Activated CD4-positive, alpha-beta memory T cell treated with anti-CD3 and anti-CD28 coated beads for 36 hours (primary cell): ENCODE measurements at regions of chr6 and their contacts with region 1.

Region 1: DNA sequence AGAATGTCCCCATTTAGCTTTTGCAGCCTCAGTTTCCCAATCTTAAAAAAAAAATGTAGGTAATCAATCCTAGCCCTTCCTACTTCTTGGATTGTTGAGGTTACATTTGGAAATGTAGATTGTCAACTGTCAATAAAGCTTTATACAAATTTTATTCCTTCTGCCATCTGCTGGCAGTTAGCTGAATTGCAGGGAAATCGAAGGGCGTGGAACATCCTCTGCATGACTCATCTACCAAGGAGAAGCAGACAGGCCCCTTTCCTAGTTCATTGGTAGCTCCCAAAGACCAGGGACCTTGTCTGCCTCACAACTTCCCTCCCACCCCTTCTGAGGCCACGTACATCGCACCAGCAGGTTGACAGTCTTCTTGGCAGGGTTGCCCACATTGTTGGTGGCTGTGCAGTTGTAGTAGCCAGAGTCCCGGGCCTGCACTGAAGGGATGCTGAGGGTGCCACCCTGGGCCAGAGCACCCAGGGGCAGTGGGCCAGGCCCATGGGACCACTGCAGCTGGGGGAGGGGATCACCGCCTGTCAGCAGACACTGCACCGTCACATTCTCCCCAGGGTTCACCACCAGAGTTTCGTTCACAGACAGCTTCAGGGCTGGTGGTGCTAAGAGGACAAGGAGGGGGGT is 43.6 kb downstream of the MDGA1 start:
- DNase-seq: peak; percentile 75
- H3K4me3 Mint-ChIP-seq: no peak overlapping the region
- H3K27ac Mint-ChIP-seq: no peak overlapping the region
- H3K4me1 Mint-ChIP-seq: peaks cover 7% of the 10 kb centered on the region
- H3K27me3 Mint-ChIP-seq: no peaks in the 10 kb centered on the region

Region 2: GRCh38 chr6:37483917-37484785 is 169.9 kb before region 1 on chr6:
- CTCF ChIA-PET with region 1: interaction called, 11 read pairs
- POLR2A ChIA-PET with region 1: no interaction called
- intact Hi-C with region 1: no loop called
- DNase-seq: peak; percentile 80
- H3K4me3 Mint-ChIP-seq: no peak overlapping the region
- H3K27ac Mint-ChIP-seq: no peak overlapping the region
- H3K4me1 Mint-ChIP-seq: peaks cover 17% of the 10 kb centered on the region
- H3K27me3 Mint-ChIP-seq: no peaks in the 10 kb centered on the region

Region 3: GRCh38 chr6:37607944-37608343 is 46.1 kb before region 1 on chr6:
- CTCF ChIA-PET with region 1: interaction called, 13 read pairs
- POLR2A ChIA-PET with region 1: no interaction called
- intact Hi-C with region 1: no loop called
- DNase-seq: no peak
- H3K4me3 Mint-ChIP-seq: no peak overlapping the region
- H3K27ac Mint-ChIP-seq: no peak overlapping the region
- H3K4me1 Mint-ChIP-seq: no peaks in the 10 kb centered on the region
- H3K27me3 Mint-ChIP-seq: peaks cover 4% of the 10 kb centered on the region

Region 4: GRCh38 chr6:37624121-37624985 is 29.7 kb before region 1 on chr6:
- CTCF ChIA-PET with region 1: interaction called, 11 read pairs
- POLR2A ChIA-PET with region 1: no interaction called
- intact Hi-C with region 1: no loop called
- DNase-seq: no peak
- H3K4me3 Mint-ChIP-seq: no peak overlapping the region
- H3K27ac Mint-ChIP-seq: no peak overlapping the region
- H3K4me1 Mint-ChIP-seq: peaks cover 32% of the 10 kb centered on the region
- H3K27me3 Mint-ChIP-seq: peaks cover 8% of the 10 kb centered on the region

Region 5: DNA sequence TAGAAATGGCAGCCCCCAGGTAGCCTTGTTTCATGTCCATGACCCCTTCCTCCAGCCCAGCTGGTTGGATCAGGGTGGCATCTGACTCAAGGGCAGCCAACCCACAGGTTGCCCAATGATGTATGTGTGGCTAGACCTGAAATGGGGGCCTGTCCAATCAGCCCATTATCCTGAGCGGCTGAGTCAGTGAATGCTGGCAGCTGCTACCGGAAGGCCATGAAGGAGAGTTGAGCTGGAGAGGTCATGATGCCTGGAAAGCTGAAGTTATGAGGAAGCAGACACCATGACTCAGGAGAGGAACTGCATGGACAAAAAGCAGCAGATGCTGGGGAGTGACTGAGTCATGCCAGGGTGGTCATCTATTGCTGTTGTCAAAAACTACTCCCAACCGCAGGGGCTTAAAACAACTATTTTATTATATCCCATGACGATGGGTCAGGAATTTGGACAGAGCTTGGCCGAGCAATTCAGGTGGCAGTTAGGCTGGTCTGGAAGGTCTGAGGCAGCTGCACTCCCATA is 23.7 kb before region 1 on chr6:
- CTCF ChIA-PET with region 1: interaction called, 12 read pairs
- POLR2A ChIA-PET with region 1: no interaction called
- intact Hi-C with region 1: no loop called
- DNase-seq: no peak
- H3K4me3 Mint-ChIP-seq: no peak overlapping the region
- H3K27ac Mint-ChIP-seq: no peak overlapping the region
- H3K4me1 Mint-ChIP-seq: peaks cover 4% of the 10 kb centered on the region
- H3K27me3 Mint-ChIP-seq: peaks cover 5% of the 10 kb centered on the region